Common myeloid progenitor, CD34-positive (primary cell): ENCODE measurements at regions of chr19 and their contacts with region 1.

Region 1: GRCh38 chr19:15101479-15102082 is 5.6 kb upstream of the SYDE1 start:
- DNase-seq: peak; percentile 60 to 80 (median 70)
- H3K4me3 ChIP-seq: no peak overlapping the region
- H3K27ac ChIP-seq: no peak overlapping the region
- H3K4me1 ChIP-seq: no peaks in the 10 kb centered on the region
- H3K27me3 ChIP-seq: peaks cover 0 to under 1% (median 0%) of the 10 kb centered on the region in 5 experiments

Region 2: GRCh38 chr19:15062036-15062435 is 39.5 kb before region 1 on chr19:
- CTCF ChIA-PET with region 1: no interaction called
- POLR2A ChIA-PET with region 1: no interaction called
- DNase-seq: no peak
- H3K4me3 ChIP-seq: no peak overlapping the region
- H3K27ac ChIP-seq: no peak overlapping the region
- H3K4me1 ChIP-seq: no peaks in the 10 kb centered on the region
- H3K27me3 ChIP-seq: peaks cover 0 to 6% (median 3%) of the 10 kb centered on the region in 5 experiments

Region 3: DNA sequence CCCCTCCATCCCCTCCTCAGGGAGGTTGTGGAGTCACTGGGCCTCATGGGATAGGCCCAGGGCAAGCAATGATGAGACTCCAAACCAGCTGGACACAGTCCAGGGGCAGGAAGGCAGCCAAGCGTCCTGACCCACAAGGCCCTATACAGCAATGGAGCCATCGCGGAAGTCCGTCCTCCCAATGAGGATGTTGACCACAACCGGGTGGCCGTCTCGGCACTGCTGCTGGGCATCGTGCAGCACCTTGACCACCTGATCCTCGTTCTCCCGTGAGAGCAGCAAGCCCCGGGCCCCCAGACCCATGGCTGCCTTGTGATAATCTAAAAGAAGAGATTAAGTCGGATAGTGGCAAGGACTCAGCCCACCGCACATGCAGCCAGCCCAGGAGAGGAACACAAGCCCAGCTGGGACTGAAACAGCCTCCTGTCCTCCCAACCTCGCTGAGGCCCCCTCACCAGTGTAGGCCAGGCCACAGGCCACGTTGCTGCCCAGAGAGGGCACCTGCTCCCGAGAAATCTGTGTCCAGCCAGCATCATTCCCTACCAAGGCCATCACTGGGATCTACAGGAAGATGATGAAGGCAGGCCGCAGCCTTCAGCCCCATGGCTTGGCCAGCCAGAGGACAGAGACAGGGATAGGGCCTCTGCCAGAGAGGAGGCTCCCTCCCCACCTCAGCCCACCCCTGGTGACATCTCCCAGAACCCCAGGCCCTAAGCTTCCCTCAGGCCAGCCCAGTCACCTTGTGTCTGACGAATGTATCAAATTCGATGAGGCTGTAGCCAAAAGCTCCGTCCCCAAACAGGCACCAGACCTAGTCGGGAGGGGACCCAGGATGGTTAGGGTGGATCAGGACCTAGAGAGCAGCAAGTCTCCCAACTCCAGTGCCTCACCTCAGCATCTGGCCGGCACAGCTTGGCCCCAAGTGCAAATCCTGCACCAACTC is 13.8 kb after region 1 on chr19:
- CTCF ChIA-PET with region 1: interaction called, 13 read pairs
- POLR2A ChIA-PET with region 1: no interaction called
- DNase-seq: no peak
- H3K4me3 ChIP-seq: no peak overlapping the region
- H3K27ac ChIP-seq: peak overlapping the region in 1 of 2 experiments; percentile 14
- H3K4me1 ChIP-seq: peaks cover 0 to 24% (median 10%) of the 10 kb centered on the region in 4 experiments
- H3K27me3 ChIP-seq: no peaks in the 10 kb centered on the region

Region 4: GRCh38 chr19:15187026-15188007 is 85.7 kb after region 1 on chr19:
- CTCF ChIA-PET with region 1: no interaction called
- POLR2A ChIA-PET with region 1: no interaction called
- DNase-seq: peak; percentile 25 to 38 (median 29)
- H3K4me3 ChIP-seq: no peak overlapping the region
- H3K27ac ChIP-seq: no peak overlapping the region
- H3K4me1 ChIP-seq: no peaks in the 10 kb centered on the region
- H3K27me3 ChIP-seq: no peaks in the 10 kb centered on the region